SK-N-SH (cell line): ENCODE measurements at regions of chr16 and their contacts with region 1.

Region 1: GRCh38 chr16:58336332-58337089 is 41.7 kb upstream of the PRSS54 start:
- DNase-seq: peak; percentile 73
- H3K4me3 ChIP-seq: peak overlapping the region in 1 of 2 experiments; percentile 31; a peak in 1 of 4 replicates
- H3K27ac ChIP-seq: no peak overlapping the region
- H3K4me1 ChIP-seq: no peaks in the 10 kb centered on the region; a peak in 2 of 4 replicates
- H3K27me3 ChIP-seq: no peaks in the 10 kb centered on the region
- CTCF ChIP-seq: peak; percentile 94
- EP300 ChIP-seq: no peak
- RAD21 ChIP-seq: peak; percentile 94

Region 2: GRCh38 chr16:58306327-58306726 is 30.2 kb before region 1 on chr16:
- CTCF ChIA-PET with region 1: interaction called, 10 read pairs
- POLR2A ChIA-PET with region 1: no interaction called
- DNase-seq: no peak
- H3K4me3 ChIP-seq: no peak overlapping the region
- H3K27ac ChIP-seq: no peak overlapping the region
- H3K4me1 ChIP-seq: no peaks in the 10 kb centered on the region
- H3K27me3 ChIP-seq: no peaks in the 10 kb centered on the region
- CTCF ChIP-seq: peak; percentile 61
- EP300 ChIP-seq: no peak
- RAD21 ChIP-seq: peak; percentile 59

Region 3: GRCh38 chr16:58451945-58452401 is 115.5 kb after region 1 on chr16:
- CTCF ChIA-PET with region 1: interaction called, 19 read pairs
- POLR2A ChIA-PET with region 1: no interaction called
- DNase-seq: no peak
- H3K4me3 ChIP-seq: no peak overlapping the region
- H3K27ac ChIP-seq: peak overlapping the region; percentile 62 to 70
- H3K4me1 ChIP-seq: peaks cover 6 to 43% of the 10 kb centered on the region in 2 experiments
- H3K27me3 ChIP-seq: no peaks in the 10 kb centered on the region
- CTCF ChIP-seq: no peak
- EP300 ChIP-seq: peak; percentile 67 to 69; a peak in 2 of 4 replicates
- RAD21 ChIP-seq: peak; percentile 30

Region 4: GRCh38 chr16:58471321-58471975 is 134.9 kb after region 1 on chr16:
- CTCF ChIA-PET with region 1: interaction called, 24 read pairs
- POLR2A ChIA-PET with region 1: no interaction called
- DNase-seq: no peak
- H3K4me3 ChIP-seq: no peak overlapping the region
- H3K27ac ChIP-seq: no peak overlapping the region
- H3K4me1 ChIP-seq: no peaks in the 10 kb centered on the region; a peak in 1 of 4 replicates
- H3K27me3 ChIP-seq: peaks cover 4% of the 10 kb centered on the region; the same call in 1 of the 2 replicates
- CTCF ChIP-seq: no peak
- EP300 ChIP-seq: no peak
- RAD21 ChIP-seq: no peak

Region 5: GRCh38 chr16:58487566-58488351 is 151.2 kb after region 1 on chr16:
- CTCF ChIA-PET with region 1: interaction called, 542 read pairs
- POLR2A ChIA-PET with region 1: interaction called, 9 read pairs
- DNase-seq: peak; percentile 92
- H3K4me3 ChIP-seq: no peak overlapping the region
- H3K27ac ChIP-seq: no peak overlapping the region
- H3K4me1 ChIP-seq: peaks cover 0 to 18% of the 10 kb centered on the region in 2 experiments; a peak in 1 of 4 replicates
- H3K27me3 ChIP-seq: no peaks in the 10 kb centered on the region
- CTCF ChIP-seq: peak; percentile 87
- EP300 ChIP-seq: no peak
- RAD21 ChIP-seq: peak; percentile 97

Region 6: DNA sequence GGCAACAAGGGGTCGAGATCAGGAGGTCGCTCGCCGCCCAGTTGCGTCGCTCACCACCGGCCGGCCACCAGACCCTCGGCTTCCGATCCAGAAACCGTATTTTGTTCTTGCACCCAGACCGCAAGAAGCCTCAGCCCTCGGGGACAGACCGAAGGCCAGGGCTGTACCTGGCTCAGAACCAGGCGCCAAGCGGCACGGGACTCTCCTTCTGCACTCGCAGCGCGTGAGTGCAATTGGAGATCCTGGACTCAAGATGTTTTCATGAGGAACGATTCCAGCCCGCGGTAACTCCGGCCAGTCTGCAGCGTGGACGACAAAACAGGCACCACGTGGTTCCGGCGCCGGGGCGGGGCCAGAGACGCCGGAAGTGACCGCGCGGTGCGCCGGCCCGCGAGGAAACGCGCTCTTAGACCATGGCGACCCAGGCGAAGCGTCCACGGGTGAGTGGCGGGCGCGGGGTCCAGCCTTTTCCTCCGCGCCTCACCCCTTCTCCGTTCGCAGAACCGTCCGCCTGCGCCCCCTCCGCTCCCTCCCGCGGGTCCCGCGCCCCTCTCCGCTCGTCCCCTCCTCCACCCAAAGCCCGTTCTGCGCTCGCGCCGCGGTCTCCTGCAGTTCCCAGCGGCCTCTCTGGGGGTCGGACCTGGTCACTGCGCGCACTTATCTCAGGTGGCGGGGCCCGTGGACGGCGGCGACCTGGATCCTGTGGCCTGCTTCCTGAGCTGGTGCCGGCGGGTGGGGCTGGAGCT is 178.8 kb after region 1 on chr16 and contains the start of gene SETD6:
- CTCF ChIA-PET with region 1: interaction called, 12 read pairs
- POLR2A ChIA-PET with region 1: no interaction called
- DNase-seq: peak; percentile 92
- H3K4me3 ChIP-seq: peak within 1 kb of the TSS; percentile 65 to 82
- H3K27ac ChIP-seq: peak within 1 kb of the TSS; percentile 43 to 80; a peak in 3 of 4 replicates
- H3K4me1 ChIP-seq: peaks cover 0 to 10% of the 10 kb centered on the region in 2 experiments; a peak in 1 of 4 replicates
- H3K27me3 ChIP-seq: no peaks in the 10 kb centered on the region
- CTCF ChIP-seq: no peak
- EP300 ChIP-seq: no peak
- RAD21 ChIP-seq: no peak
- polyA plus RNA-seq, gene SETD6: 17.2 and 22.2 TPM in 2 replicates

Region 7: GRCh38 chr16:58699151-58699550 is 362.6 kb after region 1 on chr16:
- CTCF ChIA-PET with region 1: no interaction called
- POLR2A ChIA-PET with region 1: no interaction called
- DNase-seq: no peak
- H3K4me3 ChIP-seq: no peak overlapping the region
- H3K27ac ChIP-seq: no peak overlapping the region
- H3K4me1 ChIP-seq: no peaks in the 10 kb centered on the region
- H3K27me3 ChIP-seq: no peaks in the 10 kb centered on the region
- CTCF ChIP-seq: no peak
- EP300 ChIP-seq: no peak
- RAD21 ChIP-seq: no peak

Region 8: DNA sequence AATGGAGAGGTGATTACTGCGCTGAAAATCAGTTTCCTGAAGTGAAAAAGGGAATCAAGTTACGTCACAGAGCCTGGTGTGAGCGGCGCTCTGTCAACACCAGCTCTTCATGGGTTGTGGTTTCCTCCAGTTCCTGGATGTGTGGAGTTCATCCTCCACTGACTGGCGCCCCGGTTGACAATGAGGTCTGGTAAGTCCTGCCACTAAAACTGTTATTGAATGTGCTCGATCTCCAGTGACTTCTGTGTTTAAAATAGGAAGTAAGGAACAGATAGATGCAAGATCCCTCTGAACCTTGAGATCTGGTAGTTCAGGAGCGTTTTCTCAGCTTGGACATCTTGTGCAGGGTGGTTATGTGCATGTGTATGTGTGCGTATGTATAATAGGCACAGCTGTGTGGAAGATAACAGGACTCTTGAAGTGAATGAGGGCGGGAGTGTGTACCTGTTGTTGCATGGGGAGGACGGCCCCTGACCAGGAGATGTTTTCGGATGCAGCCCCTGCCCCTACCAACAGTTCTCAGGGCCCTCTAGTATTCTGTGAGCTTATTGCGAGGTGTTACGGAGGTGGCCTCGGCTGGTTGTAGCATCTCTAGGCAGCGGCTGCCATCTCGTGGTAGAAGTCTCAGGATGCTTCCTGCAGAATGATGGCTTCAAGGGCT is 419.6 kb after region 1 on chr16:
- CTCF ChIA-PET with region 1: interaction called, 20 read pairs
- POLR2A ChIA-PET with region 1: no interaction called
- DNase-seq: peak; percentile 75
- H3K4me3 ChIP-seq: no peak overlapping the region; a peak in 1 of 4 replicates
- H3K27ac ChIP-seq: no peak overlapping the region
- H3K4me1 ChIP-seq: no peaks in the 10 kb centered on the region
- H3K27me3 ChIP-seq: no peaks in the 10 kb centered on the region; the same call in 1 of the 2 replicates
- CTCF ChIP-seq: peak; percentile 71
- EP300 ChIP-seq: no peak
- RAD21 ChIP-seq: peak; percentile 94